Thyroid gland (tissue), 4 donors: ENCODE measurements at regions of chr3 and their contacts with region 1.

Region 1: DNA sequence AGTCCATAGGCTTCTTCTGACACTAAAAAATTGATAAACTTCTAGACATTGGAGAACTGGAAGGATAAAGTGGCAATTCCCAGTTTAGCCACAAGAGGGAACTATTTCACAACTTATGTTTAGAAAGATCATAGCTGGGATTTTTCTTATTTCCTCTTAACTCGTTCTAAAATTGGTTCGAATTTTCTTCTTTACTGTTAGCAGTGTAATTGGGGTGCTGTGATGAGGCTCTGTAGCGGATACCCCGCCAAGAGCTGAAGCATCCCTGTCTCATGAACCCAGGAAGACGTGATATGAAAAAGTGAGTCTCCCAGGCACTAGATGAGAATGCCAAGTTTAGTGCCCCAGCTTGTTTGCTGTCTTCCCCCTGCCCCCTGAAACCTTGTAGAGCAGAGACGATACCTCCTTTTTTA is 85.1 kb downstream of the PDCD6IP start:
- DNase-seq: no peak
- H3K4me3 ChIP-seq: no peak overlapping the region
- H3K27ac ChIP-seq: no peak overlapping the region
- H3K4me1 ChIP-seq: peaks cover 0 to 4% of the 10 kb centered on the region in 2 donors
- H3K27me3 ChIP-seq: no peaks in the 10 kb centered on the region
- CTCF ChIP-seq: peak; percentile 31 to 81 (median 75)
- POLR2A ChIP-seq: no peak

Region 2: DNA sequence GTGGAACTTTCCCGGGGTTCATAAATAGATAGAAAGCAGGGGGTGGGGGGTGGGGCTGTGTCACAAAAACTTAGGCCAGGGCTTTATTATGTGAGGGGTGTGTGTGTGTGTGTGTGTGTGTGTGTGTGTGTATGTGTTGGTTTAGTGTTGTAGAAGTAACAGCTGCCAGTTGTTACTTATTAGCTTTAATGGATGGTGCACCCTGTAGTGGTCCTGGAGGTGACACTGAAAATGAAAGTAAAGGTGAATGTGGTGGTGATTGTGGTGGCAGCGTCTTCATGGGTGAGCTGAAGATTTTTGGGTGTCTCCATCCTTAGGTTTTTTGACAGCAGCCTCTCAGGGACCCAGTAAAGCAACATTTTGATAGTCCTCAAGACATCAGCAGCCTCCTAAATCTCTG is 364.8 kb after region 1 on chr3:
- intact Hi-C with region 1: no loop called
- DNase-seq: no peak
- H3K4me3 ChIP-seq: no peak overlapping the region
- H3K27ac ChIP-seq: no peak overlapping the region
- H3K4me1 ChIP-seq: no peaks in the 10 kb centered on the region
- H3K27me3 ChIP-seq: no peaks in the 10 kb centered on the region
- CTCF ChIP-seq: no peak
- POLR2A ChIP-seq: no peak

Region 3: GRCh38 chr3:34683851-34684250 is 800.3 kb after region 1 on chr3:
- intact Hi-C with region 1: loop called (anchors 10 kb)
- DNase-seq: peak; percentile 42 to 50
- H3K4me3 ChIP-seq: no peak overlapping the region
- H3K27ac ChIP-seq: no peak overlapping the region
- H3K4me1 ChIP-seq: no peaks in the 10 kb centered on the region
- H3K27me3 ChIP-seq: no peaks in the 10 kb centered on the region
- CTCF ChIP-seq: peak in 4 of 6 experiments; percentile 8 to 46 (median 24)
- POLR2A ChIP-seq: no peak